Calu3 (cell line): ENCODE measurements at regions of chr9 and their contacts with region 1.

Region 1: GRCh38 chr9:16595227-16595626 is 275.2 kb downstream of the BNC2 start:
- DNase-seq: no peak
- H3K4me3 Mint-ChIP-seq: no peak overlapping the region
- H3K27ac Mint-ChIP-seq: no peak overlapping the region
- H3K4me1 Mint-ChIP-seq: no peaks in the 10 kb centered on the region
- H3K27me3 Mint-ChIP-seq: no peaks in the 10 kb centered on the region
- CTCF ChIP-seq: no peak

Region 2: DNA sequence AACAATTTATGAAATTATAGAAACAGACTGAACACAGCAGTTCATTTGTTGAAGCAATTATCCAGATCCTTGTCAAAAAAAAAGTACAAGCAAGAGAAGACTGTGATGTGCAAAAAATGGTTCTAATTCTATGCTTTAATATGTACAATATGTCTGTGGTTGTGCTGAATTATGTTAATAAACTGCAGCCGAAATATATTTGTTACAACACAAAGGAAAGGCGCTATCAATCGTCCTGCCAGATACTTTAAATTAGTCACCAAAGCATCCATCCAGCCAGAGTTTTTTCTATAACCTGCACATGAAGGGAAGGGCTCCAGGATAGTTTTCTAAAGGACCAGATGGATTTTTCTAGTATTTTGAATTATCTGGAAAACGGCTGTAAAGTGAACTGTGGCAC is 15.8 kb after region 1 on chr9:
- CTCF ChIA-PET with region 1: interaction called, 11 read pairs
- intact Hi-C with region 1: no loop called
- DNase-seq: no peak
- H3K4me3 Mint-ChIP-seq: no peak overlapping the region
- H3K27ac Mint-ChIP-seq: no peak overlapping the region
- H3K4me1 Mint-ChIP-seq: no peaks in the 10 kb centered on the region
- H3K27me3 Mint-ChIP-seq: no peaks in the 10 kb centered on the region
- CTCF ChIP-seq: no peak

Region 3: DNA sequence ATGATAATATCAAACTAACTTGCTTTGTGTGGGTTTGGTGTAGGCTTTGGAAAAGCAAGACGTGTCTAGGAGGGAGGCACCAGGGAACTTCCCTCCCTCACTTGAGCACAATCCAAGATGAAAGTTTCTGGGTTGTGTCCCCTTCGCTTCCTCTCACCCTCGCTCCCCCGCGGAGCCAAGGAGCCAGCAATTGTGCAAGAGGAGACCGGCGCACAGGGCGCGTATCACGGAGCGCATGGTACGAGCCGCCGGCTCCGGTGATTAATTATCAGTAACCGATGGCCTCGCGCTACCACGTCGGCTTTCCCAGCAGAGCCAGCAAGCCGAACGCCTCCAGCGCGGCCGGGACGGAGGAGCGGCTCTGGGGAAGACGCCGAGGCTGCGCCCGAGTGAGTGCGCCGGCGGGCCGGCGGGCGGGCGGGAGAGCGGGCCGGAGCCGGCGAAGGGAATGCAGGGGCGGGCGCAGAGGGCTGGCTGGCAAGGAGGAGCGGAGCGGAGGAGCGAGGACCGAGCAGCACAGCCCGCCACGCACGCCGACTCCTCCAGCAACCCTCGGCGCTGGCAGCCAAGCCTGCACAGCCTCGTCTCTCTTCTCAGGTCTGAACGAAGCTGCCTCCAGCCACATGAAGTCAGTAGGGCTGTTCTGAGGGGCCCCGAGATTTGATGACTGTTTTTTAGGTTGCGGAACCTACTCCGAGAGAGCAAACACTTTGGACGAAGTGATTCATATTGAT is 131.7 kb after region 1 on chr9:
- CTCF ChIA-PET with region 1: no interaction called
- intact Hi-C with region 1: no loop called
- DNase-seq: peak; percentile 51
- H3K4me3 Mint-ChIP-seq: peak overlapping the region; percentile 87
- H3K27ac Mint-ChIP-seq: no peak overlapping the region
- H3K4me1 Mint-ChIP-seq: peaks cover 8% of the 10 kb centered on the region
- H3K27me3 Mint-ChIP-seq: peaks cover 16% of the 10 kb centered on the region
- CTCF ChIP-seq: no peak

Region 4: DNA sequence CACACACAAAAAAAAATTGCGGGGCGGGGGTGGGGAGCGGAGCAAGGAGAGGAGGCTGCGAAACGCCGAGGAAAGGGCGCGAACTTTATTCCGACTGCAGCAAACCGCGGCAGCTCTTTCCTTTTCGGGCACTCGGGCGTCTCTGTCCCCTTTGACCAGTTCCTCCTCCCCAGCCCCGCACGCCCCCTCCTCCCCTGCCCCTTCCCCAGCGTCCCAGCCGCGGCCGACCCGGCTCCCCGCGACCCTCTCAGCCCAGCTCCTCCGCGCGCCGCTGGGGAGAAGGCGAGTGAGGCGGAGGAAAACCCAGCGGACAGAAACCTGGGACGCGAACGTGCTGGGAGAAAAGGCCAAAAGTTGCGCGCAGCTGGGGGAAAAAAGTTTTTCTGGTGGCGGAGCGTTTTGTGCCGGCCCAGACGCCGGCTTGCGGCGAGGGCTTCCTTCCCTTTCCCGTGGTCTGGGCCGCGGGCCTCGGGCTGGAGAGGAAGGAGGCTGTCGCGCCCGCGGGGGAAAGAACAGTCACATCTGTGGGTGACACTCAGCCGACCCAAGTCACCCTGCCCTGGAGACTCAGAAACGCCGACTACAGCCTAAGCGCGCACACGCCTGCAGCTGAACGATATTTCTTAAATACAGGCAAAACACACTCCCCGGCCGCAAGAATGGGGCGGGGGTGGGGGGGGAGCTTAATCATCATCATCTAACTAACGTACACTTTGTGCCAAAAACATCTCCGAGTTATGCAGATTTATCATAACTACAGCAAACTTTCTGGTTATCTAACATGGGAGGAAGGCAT is 276.3 kb after region 1 on chr9:
- CTCF ChIA-PET with region 1: no interaction called
- intact Hi-C with region 1: no loop called
- DNase-seq: peak; percentile 12
- H3K4me3 Mint-ChIP-seq: peak overlapping the region; percentile 79
- H3K27ac Mint-ChIP-seq: no peak overlapping the region
- H3K4me1 Mint-ChIP-seq: no peaks in the 10 kb centered on the region
- H3K27me3 Mint-ChIP-seq: peaks cover 13% of the 10 kb centered on the region
- CTCF ChIP-seq: no peak

Region 5: DNA sequence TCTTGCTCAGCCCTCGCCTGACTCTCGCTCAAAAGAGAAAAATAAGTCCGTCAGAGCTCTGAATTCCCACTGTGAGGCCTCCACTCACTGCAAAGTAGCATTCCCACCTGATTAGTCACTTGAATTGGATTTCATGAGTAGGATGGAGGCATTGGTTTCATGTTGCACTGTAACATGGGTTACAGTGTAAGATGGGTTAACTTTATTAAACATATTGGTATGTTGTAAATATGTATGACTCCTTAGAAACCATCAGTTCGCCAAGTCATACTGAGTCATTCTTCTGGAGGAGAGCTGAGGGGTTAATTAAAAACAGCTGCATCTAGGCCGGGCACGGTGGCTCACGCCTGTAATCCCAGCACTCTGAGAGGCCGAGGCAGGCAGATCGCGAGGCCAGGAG is 369.0 kb after region 1 on chr9:
- CTCF ChIA-PET with region 1: no interaction called
- intact Hi-C with region 1: no loop called
- DNase-seq: no peak
- H3K4me3 Mint-ChIP-seq: no peak overlapping the region
- H3K27ac Mint-ChIP-seq: no peak overlapping the region
- H3K4me1 Mint-ChIP-seq: no peaks in the 10 kb centered on the region
- H3K27me3 Mint-ChIP-seq: no peaks in the 10 kb centered on the region
- CTCF ChIP-seq: no peak